HEK293 (cell line): ENCODE measurements at regions of chr17 and their contacts with region 1.

Region 1: DNA sequence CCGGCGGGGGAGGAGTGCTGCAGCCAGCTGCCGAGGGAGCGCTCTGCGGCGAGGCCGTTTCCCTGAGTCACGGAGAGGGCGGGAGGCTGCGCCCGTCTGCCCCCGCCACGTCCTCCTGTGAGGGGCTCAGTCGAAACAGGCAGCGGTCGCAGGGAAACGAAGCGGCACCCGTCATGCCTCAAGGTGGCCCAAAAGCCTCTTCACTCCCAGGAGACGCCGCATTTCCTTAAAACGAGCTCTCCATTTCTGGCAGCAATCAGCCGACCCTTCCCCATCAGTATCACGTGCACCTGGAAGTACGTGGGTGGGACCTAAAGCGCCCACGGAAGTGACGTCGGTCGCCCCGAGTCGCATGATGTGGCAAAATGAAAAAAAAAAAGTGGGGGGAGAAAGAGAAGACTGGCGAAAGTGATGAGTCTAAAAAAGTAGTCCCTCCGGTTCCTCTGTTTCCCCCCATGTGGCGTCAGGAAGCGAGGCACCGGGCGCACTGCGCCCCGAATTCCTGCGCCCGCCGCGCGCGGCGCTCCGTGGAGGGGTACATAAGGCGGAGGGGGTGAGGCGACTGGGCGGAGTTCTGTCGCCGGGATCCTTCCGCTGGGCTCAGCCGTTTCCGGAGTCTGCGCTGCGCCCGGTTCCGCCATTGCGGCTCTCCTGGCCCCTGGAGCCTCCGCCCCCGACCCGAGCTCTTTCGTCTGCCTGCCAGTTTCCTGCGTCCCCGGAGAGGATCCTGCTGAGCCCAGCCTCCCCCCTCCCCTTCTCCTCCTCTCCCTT is at the start of gene CLTC:
- H3K4me3 ChIP-seq: peak within 1 kb of the TSS; percentile 64
- H3K27ac ChIP-seq: peak within 1 kb of the TSS; percentile 96
- H3K4me1 ChIP-seq: peaks cover 16% of the 10 kb centered on the region
- CTCF ChIP-seq: peak; percentile 50

Region 2: DNA sequence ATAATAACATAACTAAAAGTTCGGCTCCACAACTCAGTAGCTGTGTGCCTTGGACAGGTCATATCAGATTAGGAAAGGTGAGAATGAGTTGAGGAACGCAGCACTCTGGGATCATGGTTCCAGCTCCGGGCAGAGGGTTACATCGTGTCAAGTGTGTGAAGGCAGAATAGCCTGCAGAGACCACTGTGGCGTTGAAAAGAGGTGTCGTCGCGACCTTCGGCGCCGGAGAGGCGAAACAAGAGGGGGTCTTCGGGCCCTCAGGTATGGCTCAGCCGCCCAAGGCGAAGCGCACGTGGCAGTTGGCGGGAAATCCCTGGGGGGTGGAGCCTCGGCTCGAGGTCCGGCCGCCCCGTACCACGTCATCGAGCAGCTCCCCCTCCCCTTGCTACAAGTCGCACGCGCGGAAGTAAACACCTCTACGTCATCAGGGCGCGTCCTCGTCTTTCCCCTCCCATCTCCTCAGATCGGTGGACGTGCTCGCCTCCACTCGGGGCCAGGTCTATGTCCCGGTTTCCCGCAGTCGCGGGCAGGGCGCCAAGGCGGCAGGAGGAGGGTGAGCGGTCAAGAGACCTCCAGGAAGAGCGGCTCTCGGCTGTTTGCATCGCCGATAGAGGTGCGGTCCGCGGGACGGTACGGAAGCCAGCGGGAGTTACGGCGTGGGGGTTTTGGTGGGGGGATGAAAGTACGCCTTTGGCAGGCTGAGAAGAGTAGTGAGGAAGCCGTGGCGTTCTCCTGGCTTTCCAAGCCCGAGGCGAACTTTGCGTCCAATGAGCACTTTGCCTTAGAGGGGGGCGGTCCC is 54.1 kb before region 1 on chr17 and contains the start of gene DHX40:
- CTCF ChIA-PET with region 1: no interaction called
- POLR2A ChIA-PET with region 1: interaction called, 17 read pairs
- H3K4me3 ChIP-seq: peak within 1 kb of the TSS; percentile 90
- H3K27ac ChIP-seq: peak within 1 kb of the TSS; percentile 37; the same call in 1 of the 2 replicates
- H3K4me1 ChIP-seq: peaks cover 5% of the 10 kb centered on the region; the same call in 1 of the 2 replicates
- CTCF ChIP-seq: peak; percentile 7; the same call in 1 of the 2 replicates

Region 3: GRCh38 chr17:59607817-59608403 is 11.6 kb before region 1 on chr17:
- CTCF ChIA-PET with region 1: interaction called, 10 read pairs
- POLR2A ChIA-PET with region 1: interaction called, 6 read pairs
- H3K4me3 ChIP-seq: no peak overlapping the region
- H3K27ac ChIP-seq: no peak overlapping the region
- H3K4me1 ChIP-seq: no peaks in the 10 kb centered on the region
- CTCF ChIP-seq: no peak

Region 4: DNA sequence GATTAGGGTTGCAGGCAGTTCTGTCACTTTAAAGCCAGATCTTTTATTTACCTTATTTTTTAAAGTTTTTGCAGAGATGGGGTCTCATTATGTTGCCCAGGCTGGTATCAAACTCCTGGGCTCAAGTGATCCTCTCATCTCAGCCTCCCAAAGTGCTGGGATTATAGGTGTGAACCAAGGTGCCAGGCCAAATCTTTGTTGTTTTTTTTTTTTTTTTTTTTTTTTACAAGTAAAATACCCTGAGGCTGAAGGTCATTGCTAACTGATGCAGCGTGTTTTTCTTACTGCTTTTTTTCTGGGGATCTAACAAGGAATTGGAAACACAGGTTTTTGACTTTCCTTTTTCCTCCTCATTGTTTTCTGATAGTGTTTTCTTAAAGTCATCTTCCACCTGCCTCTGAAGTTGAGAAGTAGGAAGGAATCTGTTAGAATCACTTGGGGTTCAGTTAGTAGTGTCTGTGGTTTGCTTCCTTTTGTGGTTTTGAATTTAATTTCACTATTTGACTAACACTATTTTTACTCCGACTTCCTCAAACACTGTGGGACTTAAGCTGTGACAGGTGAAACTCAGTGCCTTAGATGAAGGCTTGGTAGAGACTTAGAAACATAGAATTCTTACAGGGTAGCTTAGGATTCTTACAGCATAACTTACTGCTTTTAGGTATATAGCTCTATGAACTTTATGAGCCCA is 22.5 kb after region 1 on chr17:
- CTCF ChIA-PET with region 1: interaction called, 3 read pairs
- POLR2A ChIA-PET with region 1: interaction called, 14 read pairs
- H3K4me3 ChIP-seq: no peak overlapping the region
- H3K27ac ChIP-seq: no peak overlapping the region
- H3K4me1 ChIP-seq: peaks cover 22% of the 10 kb centered on the region
- CTCF ChIP-seq: no peak

Region 5: DNA sequence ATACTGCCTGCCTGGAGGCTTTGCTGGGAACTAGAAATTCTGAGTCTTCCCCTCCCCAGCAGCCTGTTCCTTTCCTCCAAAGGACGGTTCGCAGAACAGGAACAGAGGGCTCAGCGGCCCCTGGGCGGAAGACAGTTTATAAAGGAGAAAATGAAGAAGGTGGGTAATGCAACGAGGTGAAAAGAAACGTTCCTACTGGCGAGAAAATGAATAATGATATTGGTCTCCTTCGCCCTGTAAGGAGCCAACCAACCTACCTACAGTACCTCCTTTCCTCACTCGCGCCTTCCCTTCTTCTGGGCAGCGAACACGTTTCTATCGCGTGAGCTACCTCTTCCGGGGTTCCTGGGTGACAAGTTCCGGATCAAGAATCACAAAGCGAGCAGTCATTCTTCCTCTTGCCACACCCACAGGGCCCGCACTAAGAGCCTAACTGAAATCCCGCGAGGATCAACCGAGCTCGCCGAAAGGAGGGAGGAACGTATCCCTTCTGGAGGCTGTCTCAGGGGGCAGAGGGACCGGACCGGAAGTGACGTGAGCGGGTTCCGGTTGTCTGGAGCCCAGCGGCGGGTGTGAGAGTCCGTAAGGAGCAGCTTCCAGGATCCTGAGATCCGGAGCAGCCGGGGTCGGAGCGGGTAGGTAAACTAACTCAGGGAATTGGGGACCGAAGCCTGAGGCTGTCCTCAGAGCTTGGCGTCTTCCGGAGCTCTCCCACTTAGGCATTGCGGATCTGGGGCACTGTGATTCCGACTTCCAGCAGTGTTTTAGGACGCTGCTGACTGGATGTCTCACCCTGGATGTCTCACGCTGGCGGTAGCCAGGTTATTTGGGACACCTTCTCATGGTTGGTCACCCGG is 87.9 kb after region 1 on chr17 and contains the starts of genes PTRH2 and VMP1:
- CTCF ChIA-PET with region 1: no interaction called
- POLR2A ChIA-PET with region 1: interaction called, 31 read pairs
- H3K4me3 ChIP-seq: peak within 1 kb of the TSS; percentile 95
- H3K27ac ChIP-seq: peak within 1 kb of the TSS; percentile 90
- H3K4me1 ChIP-seq: peaks cover 16% of the 10 kb centered on the region
- CTCF ChIP-seq: no peak; the same call in 1 of the 2 replicates